ENCODE measurements at regions of chr14 and their contacts with region 1.

Region 1: DNA sequence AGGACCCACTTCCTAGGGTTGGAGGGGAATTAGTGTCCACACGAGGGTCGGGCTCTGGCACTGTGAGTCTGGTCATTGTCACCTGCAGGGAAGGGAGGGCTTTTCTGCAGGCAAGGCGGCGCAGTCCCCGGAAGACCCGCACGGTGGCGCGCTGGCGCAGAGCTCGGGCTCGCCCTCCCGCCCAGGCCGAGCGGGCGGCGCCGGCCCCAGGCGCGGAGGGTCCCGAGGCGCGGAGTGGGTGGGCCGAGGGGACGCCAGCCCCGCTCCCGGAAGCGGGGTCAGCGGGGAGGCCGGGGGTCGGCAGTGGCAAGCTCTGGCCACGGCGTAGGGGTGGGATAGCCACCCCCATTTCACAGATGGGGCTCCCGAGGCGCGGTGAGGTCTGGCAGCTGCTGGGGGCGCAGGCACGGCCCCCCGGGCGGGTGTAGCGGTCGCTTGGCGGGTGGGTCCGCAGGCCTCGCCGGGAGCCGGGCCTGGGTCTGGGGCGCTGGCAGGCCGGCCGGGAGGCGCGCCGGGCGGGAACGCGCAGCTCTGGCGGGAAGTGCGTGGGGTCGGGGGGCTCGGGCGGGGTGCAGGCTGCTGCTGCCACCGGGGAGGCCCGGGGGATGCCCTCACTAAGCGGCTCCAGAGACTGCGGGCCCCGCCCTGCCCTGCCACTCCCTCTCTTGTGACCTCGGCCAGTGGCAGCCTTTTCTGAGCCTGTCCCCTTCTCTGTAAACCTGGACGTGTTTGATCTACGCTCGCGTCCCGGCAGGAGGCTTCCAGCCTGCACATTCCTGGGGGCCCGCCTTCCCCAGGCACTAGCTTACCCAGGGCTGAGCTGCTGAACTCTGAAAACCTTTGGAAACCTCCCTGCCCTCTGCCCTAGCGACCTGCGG is 46.1 kb downstream of the CYP46A1 start:
- DNase-seq: peak; percentile 87

Region 2: DNA sequence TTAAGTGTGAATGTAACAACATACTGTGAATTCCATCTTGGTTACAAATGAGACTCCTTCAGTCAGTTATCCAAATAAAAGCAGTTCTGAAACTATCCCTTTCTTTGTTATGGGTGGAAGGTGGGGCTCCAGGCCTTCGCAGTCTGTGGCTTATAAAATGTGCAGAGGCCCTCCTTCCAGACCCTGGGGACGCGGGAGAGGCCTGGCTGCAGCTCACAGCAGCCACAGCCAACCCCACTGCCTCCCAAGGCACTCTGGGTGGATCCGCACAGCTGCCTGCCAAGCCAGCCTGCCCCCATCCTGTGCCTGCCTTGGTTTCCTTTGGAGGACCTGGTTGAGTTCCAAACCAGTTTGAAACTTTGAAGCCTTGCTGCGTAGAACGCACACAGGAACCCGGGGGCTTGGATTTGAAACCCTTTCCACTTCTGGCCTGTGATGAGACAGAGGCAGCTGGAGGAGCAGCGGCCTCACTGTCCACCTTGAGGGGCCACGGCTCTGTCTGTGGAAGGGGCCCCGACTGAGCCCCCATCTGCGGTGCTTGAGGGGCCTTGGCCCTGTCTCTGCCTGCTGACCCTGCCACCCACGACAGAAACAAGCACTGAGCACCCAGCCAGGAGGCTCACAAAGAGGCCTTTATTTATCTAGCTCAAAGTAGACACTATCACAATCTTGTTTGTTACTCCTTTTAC is 218.7 kb before region 1 on chr14:
- intact Hi-C with region 1: no loop called
- DNase-seq: peak; percentile 83

Region 3: GRCh38 chr14:99793213-99794150 is 63.3 kb after region 1 on chr14 and contains the start of gene EML1:
- intact Hi-C with region 1: loop called in 1 of 2 experiments (anchors 5 kb)
- DNase-seq: peak; percentile 94
- total RNA-seq, gene EML1: 83.1 to 92.6 TPM

Region 4: GRCh38 chr14:99809360-99809759 is 79.1 kb after region 1 on chr14:
- intact Hi-C with region 1: loop called in 1 of 2 experiments (anchors 10 kb)
- DNase-seq: peak; percentile 92

Region 5: DNA sequence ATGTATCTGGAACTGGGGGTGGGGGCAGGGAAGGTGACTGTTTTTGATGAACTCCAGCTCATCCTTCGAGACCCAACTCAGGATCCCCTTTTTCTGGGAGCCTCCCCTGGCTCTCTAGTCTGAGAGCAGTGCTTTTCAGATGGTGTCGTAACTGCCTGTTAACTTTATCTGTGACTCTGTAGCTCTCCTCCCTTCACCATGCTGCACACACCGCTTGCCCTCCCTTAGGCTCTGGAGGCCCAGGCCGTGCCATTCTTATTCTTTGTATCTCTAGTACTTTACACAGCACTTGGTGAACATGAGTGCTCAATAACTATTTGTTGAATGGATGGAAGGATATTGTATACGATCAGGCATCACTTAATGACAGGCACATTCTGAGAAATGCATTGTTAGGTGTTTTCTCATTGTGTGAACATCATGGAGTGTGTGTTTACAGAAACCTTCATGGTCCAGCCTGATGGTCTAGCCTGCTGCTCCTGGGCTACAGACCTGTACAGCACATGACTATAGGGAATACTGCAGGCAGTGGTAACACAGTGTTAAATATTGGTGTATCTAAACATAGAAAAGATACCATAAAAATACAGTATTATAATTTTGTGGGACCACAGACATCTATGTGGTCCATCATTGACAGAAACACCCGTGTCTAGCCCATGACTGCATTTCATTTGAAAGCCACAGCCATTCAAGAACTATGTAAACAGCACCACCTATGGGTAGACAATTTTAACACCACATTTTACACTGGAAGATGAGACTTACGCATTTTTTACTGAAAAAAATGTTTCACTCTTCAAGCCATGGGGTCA is 154.8 kb after region 1 on chr14:
- intact Hi-C with region 1: loop called (anchors 5 kb)
- DNase-seq: no peak

Measured in posterior vena cava (tissue), 2 donors.